ENCODE measurements at regions of chr2 and their contacts with region 1.

Region 1: DNA sequence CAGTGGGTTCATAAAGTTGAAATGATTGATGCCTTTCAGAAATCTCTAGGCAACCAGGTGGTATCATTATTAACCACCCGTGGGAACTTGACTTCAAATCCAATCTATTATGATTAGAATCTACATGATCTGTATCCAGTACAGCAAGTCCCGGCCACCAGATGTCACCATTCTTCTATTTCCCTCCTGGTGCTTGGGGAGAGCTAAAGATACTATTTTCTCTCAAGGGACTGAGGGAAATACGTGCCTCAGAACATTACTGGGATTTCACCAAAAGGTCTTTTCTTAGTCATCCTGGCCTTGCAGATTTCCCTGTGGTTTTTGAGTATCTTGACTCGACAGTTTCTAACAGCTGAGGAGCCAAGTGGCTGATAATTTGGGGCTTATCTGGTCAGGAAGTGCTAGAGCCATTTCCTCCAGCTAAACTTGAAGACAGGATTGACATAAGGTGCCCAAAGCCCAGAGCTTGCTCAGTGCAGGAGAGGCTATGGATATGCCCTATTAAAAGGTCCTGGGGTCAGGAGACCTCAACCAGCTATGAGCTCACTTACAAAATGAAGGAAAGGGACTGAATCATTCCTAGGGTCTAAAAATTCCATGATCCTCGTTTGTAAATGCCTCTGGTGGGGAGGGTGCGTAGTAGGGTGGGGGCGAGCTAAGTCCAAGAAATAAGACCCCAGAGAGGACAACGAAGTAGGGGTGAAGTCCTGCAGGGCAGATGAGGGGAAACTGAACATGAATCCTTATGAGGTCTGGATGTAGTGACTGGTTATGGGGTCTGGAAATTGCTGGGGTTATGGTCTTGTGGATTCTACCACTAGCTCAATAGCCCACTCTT is 135.4 kb upstream of the MGAT5 start:
- DNase-seq: peak; percentile 88
- ATAC-seq: peak; percentile 25
- H3K4me3 ChIP-seq: peak overlapping the region; percentile 2 to 94 (median 83)
- H3K4me3 Mint-ChIP-seq: peak overlapping the region; percentile 94
- H3K27ac ChIP-seq: peak overlapping the region in 1 of 2 donors; percentile 24
- H3K27ac Mint-ChIP-seq: peak overlapping the region; percentile 97
- H3K4me1 ChIP-seq: peaks cover 33 to 38% of the 10 kb centered on the region in 2 donors
- H3K4me1 Mint-ChIP-seq: peaks cover 36% of the 10 kb centered on the region
- H3K27me3 ChIP-seq: no peaks in the 10 kb centered on the region
- H3K27me3 Mint-ChIP-seq: no peaks in the 10 kb centered on the region
- CTCF ChIP-seq: peak; percentile 80

Region 2: DNA sequence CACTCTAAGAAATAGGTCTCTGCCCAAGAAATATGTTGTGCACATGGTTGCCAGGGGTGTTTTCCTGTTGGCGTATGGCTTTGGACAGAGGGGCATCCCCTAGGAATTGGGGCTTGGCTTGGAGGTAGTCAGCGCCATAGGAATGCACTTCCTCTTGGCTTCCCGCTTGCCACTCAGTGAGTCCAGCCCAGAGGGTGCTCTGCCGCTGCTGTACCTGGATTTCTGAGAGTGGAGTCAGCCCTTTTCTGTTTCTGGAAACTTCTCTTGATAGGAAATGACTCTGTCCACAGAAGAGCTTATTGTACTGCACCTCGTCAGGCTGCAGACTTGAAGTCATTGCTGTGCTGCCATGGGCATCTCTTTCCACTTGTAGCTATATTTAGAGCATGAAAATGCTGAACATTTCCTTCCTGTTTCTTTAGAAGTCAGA is 18.7 kb after region 1 on chr2:
- CTCF ChIA-PET with region 1: interaction called, 3 read pairs
- POLR2A ChIA-PET with region 1: no interaction called
- intact Hi-C with region 1: loop called (anchors 2 kb)
- DNase-seq: no peak
- ATAC-seq: peak; percentile 28
- H3K4me3 ChIP-seq: peak overlapping the region in 1 of 5 experiments; percentile 28
- H3K4me3 Mint-ChIP-seq: peak overlapping the region; percentile 75
- H3K27ac ChIP-seq: peak overlapping the region in 1 of 2 donors; percentile 65
- H3K27ac Mint-ChIP-seq: peak overlapping the region; percentile 85
- H3K4me1 ChIP-seq: peaks cover 75 to 76% of the 10 kb centered on the region in 2 donors
- H3K4me1 Mint-ChIP-seq: peaks cover 84% of the 10 kb centered on the region
- H3K27me3 ChIP-seq: no peaks in the 10 kb centered on the region
- H3K27me3 Mint-ChIP-seq: no peaks in the 10 kb centered on the region
- CTCF ChIP-seq: no peak

Region 3: GRCh38 chr2:134207564-134208209 is 89.2 kb after region 1 on chr2:
- CTCF ChIA-PET with region 1: interaction called, 118 read pairs
- POLR2A ChIA-PET with region 1: interaction called, 7 read pairs
- intact Hi-C with region 1: loop called (anchors 5 kb)
- DNase-seq: peak; percentile 68
- ATAC-seq: peak; percentile 82
- H3K4me3 ChIP-seq: no peak overlapping the region
- H3K4me3 Mint-ChIP-seq: no peak overlapping the region
- H3K27ac ChIP-seq: peak overlapping the region in 1 of 2 donors; percentile 64
- H3K27ac Mint-ChIP-seq: peak overlapping the region; percentile 69
- H3K4me1 ChIP-seq: peaks cover 49 to 53% of the 10 kb centered on the region in 2 donors
- H3K4me1 Mint-ChIP-seq: peaks cover 12% of the 10 kb centered on the region
- H3K27me3 ChIP-seq: no peaks in the 10 kb centered on the region
- H3K27me3 Mint-ChIP-seq: no peaks in the 10 kb centered on the region
- CTCF ChIP-seq: peak; percentile 75

Region 4: GRCh38 chr2:134253804-134254203 is 135.3 kb after region 1 on chr2 and contains the start of gene MGAT5:
- CTCF ChIA-PET with region 1: interaction called, 41 read pairs
- POLR2A ChIA-PET with region 1: no interaction called
- intact Hi-C with region 1: no loop called
- DNase-seq: peak; percentile 85
- ATAC-seq: peak; percentile 59
- H3K4me3 ChIP-seq: peak within 1 kb of the TSS; percentile 30 to 66 (median 62)
- H3K4me3 Mint-ChIP-seq: peak within 1 kb of the TSS; percentile 72
- H3K27ac ChIP-seq: peak within 1 kb of the TSS; percentile 83 to 87
- H3K27ac Mint-ChIP-seq: peak within 1 kb of the TSS; percentile 90
- H3K4me1 ChIP-seq: peaks cover 92 to 95% of the 10 kb centered on the region in 2 donors
- H3K4me1 Mint-ChIP-seq: peaks cover 90% of the 10 kb centered on the region
- H3K27me3 ChIP-seq: no peaks in the 10 kb centered on the region
- H3K27me3 Mint-ChIP-seq: no peaks in the 10 kb centered on the region
- CTCF ChIP-seq: no peak
- total RNA-seq, gene MGAT5: 177 and 184 TPM in 2 replicates

Region 5: DNA sequence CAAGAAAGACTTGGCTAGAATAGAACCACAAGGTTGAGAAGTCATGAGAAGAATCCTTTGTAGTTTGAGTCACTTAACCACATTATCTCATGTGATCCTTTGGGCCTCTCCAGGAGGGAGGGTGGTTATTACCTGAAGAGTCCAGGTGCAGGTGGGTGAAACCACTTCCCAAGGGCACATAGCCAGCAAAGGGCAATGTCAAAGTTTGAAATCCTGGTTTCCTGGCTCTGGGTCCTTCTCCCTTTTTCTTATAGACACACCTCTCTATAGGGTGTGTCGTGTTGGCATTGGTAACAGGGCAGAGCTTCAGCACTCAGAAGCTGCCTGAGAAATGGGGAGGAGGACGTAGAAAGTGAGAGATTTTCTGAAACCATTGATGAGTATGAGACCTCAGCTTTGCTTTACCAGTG is 273.3 kb after region 1 on chr2:
- CTCF ChIA-PET with region 1: interaction called, 10 read pairs
- POLR2A ChIA-PET with region 1: no interaction called
- intact Hi-C with region 1: no loop called
- DNase-seq: peak; percentile 23
- ATAC-seq: peak; percentile 31
- H3K4me3 ChIP-seq: no peak overlapping the region
- H3K4me3 Mint-ChIP-seq: no peak overlapping the region
- H3K27ac ChIP-seq: peak overlapping the region; percentile 41 to 61
- H3K27ac Mint-ChIP-seq: peak overlapping the region; percentile 80
- H3K4me1 ChIP-seq: peaks cover 13 to 21% of the 10 kb centered on the region in 2 donors
- H3K4me1 Mint-ChIP-seq: peaks cover 29% of the 10 kb centered on the region
- H3K27me3 ChIP-seq: no peaks in the 10 kb centered on the region
- H3K27me3 Mint-ChIP-seq: no peaks in the 10 kb centered on the region
- CTCF ChIP-seq: no peak

Region 6: DNA sequence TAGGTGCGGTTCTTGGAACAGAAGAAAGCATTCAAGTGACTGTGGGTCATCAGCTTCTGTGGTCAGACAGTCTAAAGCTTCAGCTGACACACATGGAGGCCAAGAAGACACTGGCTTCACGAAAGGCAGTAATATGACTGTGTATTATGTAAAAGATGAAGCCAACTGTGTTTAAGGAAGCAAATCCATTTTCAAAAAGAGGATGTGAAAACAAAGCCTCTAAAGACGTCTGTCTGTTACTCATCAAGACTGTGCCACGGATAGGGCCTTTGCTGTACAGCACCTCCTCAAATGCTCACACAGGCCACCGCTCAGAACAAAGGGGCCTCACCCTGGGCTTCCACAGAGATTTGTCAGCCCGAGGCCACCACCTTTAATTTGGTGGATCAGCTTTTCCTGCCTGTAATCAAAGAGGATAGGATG is 621.4 kb after region 1 on chr2:
- CTCF ChIA-PET with region 1: no interaction called
- POLR2A ChIA-PET with region 1: no interaction called
- intact Hi-C with region 1: loop called (anchors 10 kb)
- DNase-seq: peak; percentile 91
- ATAC-seq: peak; percentile 81
- H3K4me3 ChIP-seq: peak overlapping the region in 2 of 5 experiments; percentile 28 to 46
- H3K4me3 Mint-ChIP-seq: peak overlapping the region; percentile 62
- H3K27ac ChIP-seq: peak overlapping the region; percentile 86 to 90
- H3K27ac Mint-ChIP-seq: peak overlapping the region; percentile 93
- H3K4me1 ChIP-seq: peaks cover 64 to 68% of the 10 kb centered on the region in 2 donors
- H3K4me1 Mint-ChIP-seq: peaks cover 71% of the 10 kb centered on the region
- H3K27me3 ChIP-seq: no peaks in the 10 kb centered on the region
- H3K27me3 Mint-ChIP-seq: no peaks in the 10 kb centered on the region
- CTCF ChIP-seq: no peak

Measured in B cell (primary cell).